Testis (tissue), 5 donors: ENCODE measurements at regions of chr9 and their contacts with region 1.

Region 1: DNA sequence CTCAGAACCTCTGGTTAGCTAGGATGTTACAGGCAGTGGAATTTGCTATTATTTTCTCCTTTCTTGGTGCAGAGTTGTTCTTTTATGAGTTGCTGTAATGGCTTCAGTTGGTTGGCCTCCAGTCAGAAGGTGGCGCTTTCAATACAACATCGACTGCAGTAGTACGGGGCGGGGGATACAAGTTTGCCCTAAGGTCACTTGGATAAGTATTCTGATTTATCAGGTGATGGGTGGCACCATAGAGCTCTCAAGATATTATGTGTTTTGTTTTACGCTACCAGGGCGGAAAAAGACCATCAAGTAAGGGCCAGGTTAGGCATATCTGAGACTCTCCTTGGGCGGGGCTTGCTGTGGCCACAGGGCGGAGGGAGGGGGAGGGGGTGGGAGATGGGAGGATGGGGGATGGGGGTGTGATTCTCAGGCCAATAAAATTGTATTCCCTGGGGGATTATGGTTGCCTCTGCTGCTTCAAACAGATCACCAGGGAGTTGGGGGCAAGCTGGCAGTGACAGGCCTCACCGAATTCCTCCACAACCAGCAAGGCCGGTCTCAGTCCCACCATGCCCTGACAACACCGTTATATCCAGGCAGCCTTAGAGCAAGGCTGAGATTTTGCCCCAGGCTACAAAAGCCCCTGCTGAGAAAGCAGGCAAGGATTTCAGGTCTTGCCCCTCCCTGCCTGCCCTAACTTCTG is 15.9 kb upstream of the RNF38 start:
- DNase-seq: no peak
- H3K4me3 ChIP-seq: no peak overlapping the region
- H3K27ac ChIP-seq: no peak overlapping the region
- H3K4me1 ChIP-seq: no peaks in the 10 kb centered on the region
- H3K27me3 ChIP-seq: no peaks in the 10 kb centered on the region
- CTCF ChIP-seq: no peak
- POLR2A ChIP-seq: no peak

Region 2: GRCh38 chr9:36123515-36123914 is 292.5 kb before region 1 on chr9:
- intact Hi-C with region 1: loop called (anchors 5 kb)
- DNase-seq: no peak
- H3K4me3 ChIP-seq: no peak overlapping the region
- H3K27ac ChIP-seq: no peak overlapping the region
- H3K4me1 ChIP-seq: peaks cover 3% of the 10 kb centered on the region
- H3K27me3 ChIP-seq: no peaks in the 10 kb centered on the region
- CTCF ChIP-seq: no peak
- POLR2A ChIP-seq: no peak